AG04450 (cell line): ENCODE measurements at regions of chr22 and their contacts with region 1.

Region 1: GRCh38 chr22:37643225-37643847 is 3.9 kb downstream of the SH3BP1 start:
- DNase-seq: peak; percentile 11
- H3K4me3 ChIP-seq: no peak overlapping the region
- H3K27ac ChIP-seq: no peak overlapping the region
- H3K27me3 ChIP-seq: no peaks in the 10 kb centered on the region
- CTCF ChIP-seq: peak; percentile 96

Region 2: DNA sequence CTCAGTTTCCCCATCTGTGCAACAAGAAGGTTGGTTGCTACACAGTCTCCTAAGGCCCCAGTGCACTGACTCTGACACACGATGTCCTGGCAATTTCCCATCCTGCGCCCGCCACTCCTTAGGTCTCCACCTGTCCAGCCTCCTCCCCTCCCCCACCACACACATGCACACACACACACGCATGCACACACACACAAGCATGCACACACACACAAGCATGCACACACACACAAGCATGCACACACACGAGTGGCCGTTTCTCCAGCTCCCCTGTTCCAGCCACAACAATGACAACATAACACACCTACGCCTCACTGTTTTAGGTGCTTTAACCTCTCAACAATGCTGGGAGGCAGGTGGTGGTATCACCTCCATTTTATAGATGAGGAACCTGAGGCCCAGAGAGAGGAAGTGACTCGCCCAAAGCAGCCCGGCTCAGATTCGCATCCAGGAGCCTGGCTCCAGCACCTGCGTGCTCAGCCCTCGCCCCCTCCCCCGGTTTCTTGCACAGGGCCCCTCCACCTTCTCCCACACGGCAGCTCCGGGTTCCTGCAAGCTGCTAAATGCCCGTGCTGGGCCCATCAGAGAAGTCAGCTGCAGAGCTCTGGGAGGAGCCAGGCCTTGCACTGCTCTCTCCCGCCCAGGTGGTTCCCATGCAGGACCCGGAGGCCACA is 348.0 kb before region 1 on chr22:
- CTCF ChIA-PET with region 1: no interaction called
- POLR2A ChIA-PET with region 1: no interaction called
- DNase-seq: no peak
- H3K4me3 ChIP-seq: no peak overlapping the region
- H3K27ac ChIP-seq: no peak overlapping the region
- H3K27me3 ChIP-seq: no peaks in the 10 kb centered on the region
- CTCF ChIP-seq: no peak

Region 3: GRCh38 chr22:37608477-37609239 is 34.7 kb before region 1 on chr22 and contains the start of gene GGA1:
- CTCF ChIA-PET with region 1: interaction called, 14 read pairs
- POLR2A ChIA-PET with region 1: no interaction called
- DNase-seq: peak; percentile 90
- H3K4me3 ChIP-seq: peak within 1 kb of the TSS; percentile 82
- H3K27ac ChIP-seq: peak within 1 kb of the TSS; percentile 99
- H3K27me3 ChIP-seq: peaks cover 12% of the 10 kb centered on the region
- CTCF ChIP-seq: no peak
- polyA plus RNA-seq, gene GGA1: 24.7 and 26.1 TPM in 2 replicates

Region 4: DNA sequence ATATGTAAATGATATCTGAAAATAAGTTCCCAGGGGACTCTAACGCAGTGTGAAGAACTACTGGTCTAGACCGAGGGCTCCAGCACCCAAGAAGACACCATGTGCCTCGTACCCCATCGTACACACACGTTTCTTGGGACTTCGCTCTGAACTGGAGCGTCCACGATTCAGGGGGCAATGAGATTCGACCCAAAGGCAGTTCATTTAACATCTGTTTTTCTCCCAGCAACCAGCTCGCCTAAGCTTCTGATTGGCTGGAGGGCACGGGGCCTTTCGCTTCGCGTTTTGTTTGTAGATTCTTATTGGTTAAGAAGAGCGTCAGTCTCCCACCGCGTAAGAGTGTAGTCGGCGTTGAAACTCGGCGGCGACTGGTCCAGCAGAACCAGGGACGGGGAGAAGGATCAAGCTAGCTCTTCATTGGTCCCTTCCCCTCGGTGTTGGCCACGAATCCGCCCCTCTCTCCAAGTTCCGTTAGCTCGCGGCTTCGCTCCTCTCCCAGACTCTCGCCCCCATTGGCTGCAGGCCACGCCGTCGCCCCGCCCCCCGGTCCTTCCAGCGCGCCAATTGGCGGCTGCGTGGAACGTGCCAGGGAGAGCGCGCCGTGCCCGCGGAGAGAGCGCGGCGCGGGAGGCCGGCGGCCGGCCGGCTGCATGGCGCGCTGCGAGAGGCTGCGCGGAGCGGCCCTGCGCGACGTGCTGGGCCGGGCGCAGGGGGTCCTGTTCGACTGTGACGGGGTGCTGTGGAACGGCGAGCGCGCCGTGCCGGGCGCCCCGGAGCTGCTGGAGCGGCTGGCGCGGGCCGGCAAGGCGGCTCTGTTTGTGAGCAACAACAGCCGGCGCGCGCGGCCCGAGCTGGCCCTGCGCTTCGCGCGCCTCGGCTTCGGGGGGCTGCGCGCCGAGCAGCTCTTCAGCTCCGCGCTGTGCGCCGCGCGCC is 15.1 kb after region 1 on chr22 and contains the start of gene PDXP:
- CTCF ChIA-PET with region 1: interaction called, 54 read pairs
- POLR2A ChIA-PET with region 1: interaction called, 16 read pairs
- DNase-seq: peak; percentile 100
- H3K4me3 ChIP-seq: peak within 1 kb of the TSS; percentile 78
- H3K27ac ChIP-seq: peak within 1 kb of the TSS; percentile 85
- H3K27me3 ChIP-seq: no peaks in the 10 kb centered on the region
- CTCF ChIP-seq: no peak
- polyA plus RNA-seq, gene PDXP: 11.7 and 17.7 TPM in 2 replicates

Region 5: DNA sequence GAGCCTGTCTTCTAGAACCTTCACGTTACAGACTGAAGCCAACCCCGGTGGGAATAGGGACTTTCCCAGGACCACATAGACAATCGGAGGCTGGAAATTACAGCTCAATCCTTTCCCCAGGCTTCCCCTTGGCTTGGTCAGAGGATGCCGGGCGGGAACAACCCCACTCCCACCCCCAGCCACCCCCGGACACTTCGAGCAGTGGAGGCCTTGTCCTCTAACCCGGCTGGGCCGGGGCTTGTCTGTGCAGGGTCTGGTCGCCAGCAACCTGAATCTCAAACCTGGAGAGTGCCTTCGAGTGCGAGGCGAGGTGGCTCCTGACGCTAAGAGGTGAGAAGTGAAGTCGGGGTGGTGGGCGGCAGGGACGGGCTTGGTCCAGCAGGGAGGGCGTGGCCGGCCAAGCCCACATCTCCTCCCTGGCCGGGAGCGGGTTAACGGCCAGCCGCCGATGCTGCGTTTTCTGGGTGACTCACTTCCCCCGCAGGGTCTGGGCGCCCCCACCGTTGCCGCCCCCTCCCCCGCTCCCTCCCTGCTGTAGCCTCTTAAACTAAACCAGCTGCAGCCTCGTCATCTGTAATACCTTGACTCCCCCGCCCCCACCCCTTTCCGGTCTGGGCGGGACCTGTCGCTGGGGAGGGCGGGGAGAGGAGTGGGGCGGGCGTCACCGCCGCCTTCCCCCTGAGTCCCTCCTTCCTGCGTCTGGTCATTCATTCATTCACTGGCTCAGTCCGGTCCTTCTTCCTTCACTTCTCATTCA is 33.6 kb after region 1 on chr22:
- CTCF ChIA-PET with region 1: interaction called, 101 read pairs
- POLR2A ChIA-PET with region 1: interaction called, 31 read pairs
- DNase-seq: peak; percentile 96
- H3K4me3 ChIP-seq: peak overlapping the region; percentile 97
- H3K27ac ChIP-seq: peak overlapping the region; percentile 72
- H3K27me3 ChIP-seq: no peaks in the 10 kb centered on the region
- CTCF ChIP-seq: no peak

Region 6: DNA sequence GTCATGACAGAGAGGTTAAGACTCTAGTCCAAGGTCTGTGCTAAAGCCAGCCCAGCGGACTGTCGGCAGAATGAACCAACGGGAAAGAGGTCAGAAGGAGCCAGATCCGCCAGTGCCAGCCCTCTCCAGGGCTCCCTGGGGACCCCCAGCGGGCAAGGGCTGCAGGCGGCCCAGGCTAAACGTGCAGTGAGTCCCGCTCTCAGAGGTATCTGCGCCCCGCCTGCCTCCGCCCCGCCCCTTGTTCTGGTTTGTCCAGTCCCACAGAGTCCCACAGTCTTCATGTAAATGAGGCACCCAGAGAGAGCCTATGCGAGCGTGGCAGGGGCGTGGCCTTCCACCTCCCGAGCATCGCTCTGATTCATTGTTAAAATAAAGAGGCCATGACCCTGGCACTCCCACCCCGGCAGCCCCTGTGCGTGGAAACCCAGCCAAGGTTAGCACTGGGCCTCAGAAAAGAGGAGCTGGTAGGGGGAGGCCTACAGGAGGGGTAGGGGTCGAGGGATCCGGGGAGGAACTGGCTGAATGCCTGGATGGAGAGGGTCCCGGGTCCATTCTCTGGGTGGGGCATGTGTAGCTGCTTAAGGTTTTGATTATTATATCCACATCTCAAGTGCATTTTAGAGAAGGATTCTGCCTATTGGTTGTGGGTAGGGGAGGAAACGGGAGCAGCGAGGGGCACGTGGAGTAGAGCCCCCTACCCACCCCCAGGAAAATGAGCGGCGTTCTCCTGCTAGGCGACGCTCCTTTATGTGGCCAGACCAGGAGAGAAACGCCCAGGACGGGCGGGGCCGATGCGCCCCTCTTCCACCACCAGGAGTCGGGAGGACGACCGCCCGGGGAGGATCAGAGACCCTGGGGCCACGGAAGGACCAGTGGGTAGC is 53.6 kb after region 1 on chr22 and contains the start of gene TRIOBP:
- CTCF ChIA-PET with region 1: interaction called, 22 read pairs
- POLR2A ChIA-PET with region 1: interaction called, 4 read pairs
- DNase-seq: peak; percentile 78
- H3K4me3 ChIP-seq: peak within 1 kb of the TSS; percentile 48
- H3K27ac ChIP-seq: no peak within 1 kb of the TSS
- H3K27me3 ChIP-seq: no peaks in the 10 kb centered on the region
- CTCF ChIP-seq: peak; percentile 66
- polyA plus RNA-seq, gene TRIOBP: 37.0 and 76.4 TPM in 2 replicates

Region 7: GRCh38 chr22:37781479-37781911 is 138.2 kb after region 1 on chr22:
- CTCF ChIA-PET with region 1: interaction called, 11 read pairs
- POLR2A ChIA-PET with region 1: no interaction called
- DNase-seq: no peak
- H3K4me3 ChIP-seq: no peak overlapping the region
- H3K27ac ChIP-seq: no peak overlapping the region
- H3K27me3 ChIP-seq: no peaks in the 10 kb centered on the region
- CTCF ChIP-seq: peak; percentile 35